ENCODE measurements at regions of chr1 and their contacts with region 1.

Region 1: DNA sequence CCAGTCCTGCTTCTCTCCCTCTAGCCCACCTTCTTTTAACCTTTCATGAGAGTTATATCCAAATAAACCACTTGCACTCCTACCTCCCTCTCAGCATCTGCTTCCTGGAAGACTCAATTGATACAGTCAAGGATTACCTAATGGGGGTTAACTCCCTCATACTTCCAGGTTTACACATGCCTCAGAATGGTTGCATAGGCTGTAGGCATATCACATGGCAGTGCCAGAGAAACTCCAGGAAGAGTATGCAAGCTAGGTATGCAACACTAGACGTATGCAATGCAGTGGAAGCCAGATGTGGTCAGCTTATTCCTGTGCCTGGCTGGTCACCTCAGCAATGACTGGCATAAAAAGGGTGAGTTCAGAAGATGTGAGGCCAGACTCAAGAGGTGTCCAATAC is 32.7 kb upstream of the VANGL1 start:
- DNase-seq: no peak
- ATAC-seq: no peak
- H3K4me3 ChIP-seq: no peak overlapping the region
- H3K27ac ChIP-seq: no peak overlapping the region
- H3K4me1 ChIP-seq: no peaks in the 10 kb centered on the region
- H3K27me3 ChIP-seq: no peaks in the 10 kb centered on the region
- CTCF ChIP-seq: no peak
- EP300 ChIP-seq: no peak
- POLR2A ChIP-seq: no peak
- RAD21 ChIP-seq: no peak

Region 2: GRCh38 chr1:115677182-115677555 is 68.1 kb after region 1 on chr1:
- CTCF ChIA-PET with region 1: interaction called, 6 read pairs
- POLR2A ChIA-PET with region 1: no interaction called
- RAD21 ChIA-PET with region 1: no interaction called
- SMC1A ChIA-PET with region 1: no interaction called
- in situ Hi-C with region 1: no loop called
- intact Hi-C with region 1: loop called (anchors 2 kb)
- DNase-seq: peak; percentile 5
- ATAC-seq: peak; percentile 83
- H3K4me3 ChIP-seq: no peak overlapping the region
- H3K27ac ChIP-seq: no peak overlapping the region
- H3K4me1 ChIP-seq: peaks cover 26% of the 10 kb centered on the region
- H3K27me3 ChIP-seq: no peaks in the 10 kb centered on the region
- CTCF ChIP-seq: no peak
- EP300 ChIP-seq: peak in 1 of 2 experiments; percentile 59; a peak in 1 of 4 replicates
- POLR2A ChIP-seq: no peak
- RAD21 ChIP-seq: no peak

Region 3: GRCh38 chr1:115764541-115764940 is 155.5 kb after region 1 on chr1:
- CTCF ChIA-PET with region 1: interaction called, 34 read pairs
- POLR2A ChIA-PET with region 1: no interaction called
- RAD21 ChIA-PET with region 1: interaction called, 21 read pairs
- SMC1A ChIA-PET with region 1: interaction called, 19 read pairs
- in situ Hi-C with region 1: no loop called
- intact Hi-C with region 1: no loop called
- DNase-seq: no peak
- ATAC-seq: peak; percentile 38; the same call in 1 of the 3 replicates
- H3K4me3 ChIP-seq: no peak overlapping the region
- H3K27ac ChIP-seq: no peak overlapping the region
- H3K4me1 ChIP-seq: no peaks in the 10 kb centered on the region
- H3K27me3 ChIP-seq: no peaks in the 10 kb centered on the region; a peak in 1 of 4 replicates
- CTCF ChIP-seq: peak; percentile 25 to 41 (median 37); a peak in 4 of 6 replicates
- EP300 ChIP-seq: no peak
- POLR2A ChIP-seq: no peak
- RAD21 ChIP-seq: peak; percentile 55

Region 4: DNA sequence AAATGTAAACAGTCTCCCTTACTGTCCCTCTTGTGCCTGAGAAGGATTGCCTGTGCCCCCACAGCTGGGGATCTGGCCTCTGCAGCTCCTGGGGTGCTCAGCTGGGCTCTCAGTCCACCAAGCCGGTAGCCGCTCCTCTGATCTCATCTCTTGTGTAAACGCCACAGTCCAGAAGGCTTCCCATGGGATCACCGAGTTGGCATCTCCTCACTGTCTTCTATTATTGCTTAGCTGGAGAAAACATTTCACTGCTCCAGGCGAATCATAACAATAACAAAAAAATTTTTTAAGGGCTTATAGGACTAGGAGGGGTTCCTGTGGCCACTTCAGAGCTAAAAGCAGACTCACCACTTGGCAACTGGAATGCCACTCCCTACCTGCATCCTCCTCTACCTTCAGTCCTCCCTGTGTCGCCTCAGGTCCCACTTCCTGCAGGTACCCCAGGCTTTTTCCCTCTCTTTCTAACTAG is 839.8 kb after region 1 on chr1:
- CTCF ChIA-PET with region 1: no interaction called
- POLR2A ChIA-PET with region 1: no interaction called
- RAD21 ChIA-PET with region 1: no interaction called
- SMC1A ChIA-PET with region 1: no interaction called
- in situ Hi-C with region 1: no loop called
- intact Hi-C with region 1: no loop called
- DNase-seq: no peak
- ATAC-seq: no peak
- H3K4me3 ChIP-seq: no peak overlapping the region
- H3K27ac ChIP-seq: no peak overlapping the region
- H3K4me1 ChIP-seq: no peaks in the 10 kb centered on the region
- H3K27me3 ChIP-seq: no peaks in the 10 kb centered on the region
- CTCF ChIP-seq: no peak
- EP300 ChIP-seq: no peak
- POLR2A ChIP-seq: no peak
- RAD21 ChIP-seq: no peak

Measured in GM12878 (cell line).